Left cardiac atrium (tissue), 4 donors: ENCODE measurements at regions of chr11 and their contacts with region 1.

Region 1: DNA sequence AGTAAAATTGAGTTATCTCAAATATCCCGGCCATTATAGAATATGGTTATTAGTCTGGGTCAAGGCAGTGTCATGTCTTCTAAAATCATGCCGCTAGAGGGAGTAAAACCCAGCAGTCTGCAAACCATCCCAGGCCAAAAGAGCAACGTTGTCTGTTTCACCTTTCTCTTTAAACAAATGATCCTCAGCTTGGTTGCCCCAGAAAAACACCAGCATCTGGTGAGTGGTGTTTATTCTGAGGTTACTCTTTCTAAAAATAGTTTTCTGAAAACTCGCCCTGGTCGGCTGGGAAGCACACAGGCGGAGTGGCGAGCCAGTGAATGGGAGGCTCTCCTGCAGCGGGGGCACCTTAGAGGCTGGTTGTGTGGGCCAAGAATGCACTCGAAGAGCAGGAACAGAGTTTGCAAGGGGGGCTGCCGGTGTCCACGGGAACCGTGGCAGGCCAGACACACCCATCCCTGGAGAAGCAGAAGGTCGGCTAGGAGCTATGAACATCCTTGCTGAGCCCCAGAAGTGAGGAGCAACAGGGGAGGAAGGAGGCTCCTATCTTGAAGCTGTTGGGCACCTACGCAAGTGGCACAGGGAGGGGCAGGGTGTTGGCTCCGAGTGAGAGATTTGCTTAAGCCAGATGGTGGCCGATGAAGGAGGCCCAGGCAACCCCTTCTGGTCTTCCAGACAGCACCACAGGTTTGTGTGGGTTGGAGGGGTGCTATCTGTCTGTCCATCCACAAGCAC is 297.1 kb downstream of the ETS1 start:
- DNase-seq: peak; percentile 43
- ATAC-seq: peak; percentile 88 to 92

Region 2: DNA sequence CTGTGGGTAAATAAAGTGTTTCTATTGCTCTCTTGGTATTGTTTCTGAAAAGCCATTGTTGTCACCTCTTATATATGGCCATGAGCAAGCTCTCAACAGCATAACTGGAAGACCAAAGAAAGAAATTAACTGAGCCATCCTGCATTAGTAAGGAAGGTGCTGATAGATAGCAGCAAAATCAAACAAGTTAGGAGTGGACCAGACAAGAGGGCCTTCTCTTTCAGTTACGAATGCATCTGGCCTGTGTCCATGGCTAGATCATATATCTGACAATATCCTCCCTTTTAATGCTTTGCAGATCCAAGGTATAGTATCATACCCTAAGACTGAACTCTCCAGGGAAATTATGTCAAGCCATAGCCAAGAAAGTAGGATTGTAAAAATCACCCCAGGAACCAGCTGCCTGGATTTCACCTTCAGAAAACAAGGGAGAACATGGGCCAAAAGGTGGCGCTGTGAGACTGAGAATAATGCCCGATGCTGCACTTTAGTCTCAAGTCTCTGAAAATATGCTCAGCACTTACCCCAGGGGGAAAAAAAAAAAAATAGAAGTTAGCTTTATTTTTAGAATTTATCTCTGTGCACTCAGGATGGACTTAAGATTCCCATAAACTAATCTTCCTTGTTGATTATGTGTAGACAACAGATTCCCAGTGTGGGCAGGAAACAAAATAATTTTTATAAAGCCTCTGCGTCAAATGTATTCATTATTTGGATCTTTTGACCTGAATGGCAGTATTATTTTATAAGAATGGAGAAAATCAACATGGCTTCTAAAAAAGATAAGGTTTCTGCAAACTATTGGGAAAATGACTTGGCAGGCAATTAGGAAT is 118.0 kb before region 1 on chr11:
- intact Hi-C with region 1: loop called (anchors 5 to 10 kb)
- DNase-seq: peak; percentile 85
- ATAC-seq: peak; percentile 83 to 91

Region 3: GRCh38 chr11:128238521-128239265 is 51.6 kb before region 1 on chr11:
- intact Hi-C with region 1: no loop called
- DNase-seq: no peak
- ATAC-seq: no peak

Region 4: GRCh38 chr11:128522055-128522942 is 232.0 kb after region 1 on chr11:
- intact Hi-C with region 1: loop called in 1 of 2 experiments (anchors 10 kb)
- DNase-seq: peak; percentile 95
- ATAC-seq: peak; percentile 97 to 98

Region 5: DNA sequence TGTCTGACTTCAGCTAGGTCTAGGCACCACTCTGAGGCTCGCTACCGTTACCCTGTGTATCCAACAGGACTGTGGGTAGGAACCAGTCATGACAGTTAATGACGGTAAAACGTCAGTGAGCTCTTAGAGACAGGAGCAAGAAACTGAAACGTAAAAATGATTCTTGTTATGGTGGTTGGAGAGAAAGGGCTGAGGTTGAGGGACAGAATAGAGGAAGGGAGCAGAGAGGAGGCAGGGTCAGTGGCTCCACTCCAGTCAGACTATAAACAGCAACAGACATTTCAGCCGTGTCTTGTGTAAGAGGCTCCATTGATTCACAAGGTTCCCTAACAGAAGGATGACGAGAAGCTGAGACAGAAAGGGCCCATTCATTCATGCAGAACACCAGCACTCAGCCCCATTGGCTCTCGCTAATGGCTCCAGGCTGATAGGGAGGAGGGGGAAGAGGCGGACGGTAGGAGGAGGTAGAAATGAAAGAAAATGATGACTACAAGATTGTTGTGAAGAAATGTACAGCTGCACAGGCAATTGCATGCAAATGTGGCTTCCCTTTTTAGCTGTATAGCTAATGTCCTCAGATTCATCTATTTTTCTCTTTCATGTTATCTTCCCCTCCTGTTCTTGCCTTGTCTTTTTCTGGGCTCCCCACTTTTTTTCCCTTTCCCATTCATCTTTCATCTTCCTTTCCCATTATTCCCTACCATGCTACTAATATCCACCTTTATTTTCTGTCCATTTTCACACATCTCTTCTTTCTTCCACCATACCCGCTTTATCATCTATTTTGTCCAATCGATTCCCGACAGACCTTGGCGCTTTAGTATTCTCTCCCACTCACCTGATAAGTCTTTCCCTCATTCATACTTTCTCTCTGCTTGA is 262.7 kb after region 1 on chr11:
- intact Hi-C with region 1: loop called in 1 of 2 experiments (anchors 10 kb)
- DNase-seq: no peak
- ATAC-seq: peak in 1 of 2 donors; percentile 22

Region 6: DNA sequence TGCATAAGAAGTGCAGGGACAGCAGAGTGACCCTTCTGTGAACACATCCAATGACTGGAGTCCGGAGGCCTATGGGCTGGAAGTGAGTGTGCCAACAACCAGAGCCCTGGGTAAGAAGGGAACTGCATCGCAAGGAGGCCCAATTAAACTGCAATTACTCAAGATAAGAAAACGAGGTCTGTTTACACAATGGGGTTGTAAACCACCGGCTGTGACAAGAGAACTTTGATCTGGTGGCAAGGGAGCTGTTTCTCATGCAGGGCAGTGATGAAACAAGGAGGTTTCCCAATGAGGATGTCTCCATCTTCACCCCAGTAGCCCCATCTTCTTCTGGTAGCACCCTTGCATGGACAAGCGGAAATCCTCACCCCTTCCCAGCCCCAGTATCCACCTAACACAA is 275.6 kb after region 1 on chr11:
- intact Hi-C with region 1: no loop called
- DNase-seq: no peak
- ATAC-seq: no peak

Region 7: GRCh38 chr11:128630367-128631230 is 340.3 kb after region 1 on chr11:
- intact Hi-C with region 1: loop called (anchors 1 to 5 kb)
- DNase-seq: peak; percentile 90
- ATAC-seq: peak; percentile 90 to 92

Region 8: DNA sequence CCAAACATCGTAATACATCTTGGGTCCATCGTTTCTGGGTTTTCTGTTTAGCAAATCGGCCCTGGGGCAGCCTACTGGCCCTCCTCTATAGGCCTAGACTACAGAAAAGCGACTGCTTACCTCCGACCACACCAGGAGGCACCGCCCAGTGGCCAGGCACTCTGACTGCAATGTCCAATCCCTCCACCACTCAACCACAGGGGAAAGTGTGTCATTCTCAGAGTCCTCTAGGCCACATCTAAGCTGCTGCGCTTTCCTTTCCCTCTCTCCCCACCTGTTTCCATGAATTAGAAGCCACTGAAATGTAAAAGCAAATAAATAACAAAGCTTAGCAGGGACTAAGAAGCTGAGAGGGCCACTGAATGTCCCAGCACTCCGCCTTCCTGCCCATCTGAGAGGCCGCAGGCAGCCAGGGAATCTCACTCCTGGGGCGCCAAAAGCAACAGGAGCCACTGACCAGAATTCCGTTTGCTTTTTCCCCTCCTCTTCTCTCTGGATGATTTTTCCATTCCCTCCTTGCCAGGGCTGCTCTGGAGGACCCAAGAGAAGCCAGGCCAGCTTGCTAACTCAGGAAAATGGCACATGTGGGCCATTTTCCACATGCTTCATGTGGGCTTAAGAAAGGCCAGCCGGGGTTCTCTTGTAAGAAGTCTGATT is 353.5 kb after region 1 on chr11:
- intact Hi-C with region 1: no loop called
- DNase-seq: no peak
- ATAC-seq: no peak

Region 9: GRCh38 chr11:128831174-128832120 is 541.2 kb after region 1 on chr11:
- intact Hi-C with region 1: loop called in 1 of 2 experiments (anchors 2 kb)
- DNase-seq: peak; percentile 73
- ATAC-seq: peak; percentile 76 to 78